ENCODE measurements at regions of chr5 and their contacts with region 1.

Region 1: GRCh38 chr5:42423285-42424165 is at the start of gene GHR:
- DNase-seq: peak; percentile 81 to 91
- ATAC-seq: peak; percentile 89 to 92 (median 90)
- H3K4me3 ChIP-seq: peak within 1 kb of the TSS; percentile 86
- H3K27ac ChIP-seq: peak within 1 kb of the TSS; percentile 89
- H3K4me1 ChIP-seq: peaks cover 41% of the 10 kb centered on the region
- H3K27me3 ChIP-seq: no peaks in the 10 kb centered on the region
- CTCF ChIP-seq: peak; percentile 88
- total RNA-seq, gene GHR: 31.4 to 60.3 (median 34.3) TPM

Region 2: DNA sequence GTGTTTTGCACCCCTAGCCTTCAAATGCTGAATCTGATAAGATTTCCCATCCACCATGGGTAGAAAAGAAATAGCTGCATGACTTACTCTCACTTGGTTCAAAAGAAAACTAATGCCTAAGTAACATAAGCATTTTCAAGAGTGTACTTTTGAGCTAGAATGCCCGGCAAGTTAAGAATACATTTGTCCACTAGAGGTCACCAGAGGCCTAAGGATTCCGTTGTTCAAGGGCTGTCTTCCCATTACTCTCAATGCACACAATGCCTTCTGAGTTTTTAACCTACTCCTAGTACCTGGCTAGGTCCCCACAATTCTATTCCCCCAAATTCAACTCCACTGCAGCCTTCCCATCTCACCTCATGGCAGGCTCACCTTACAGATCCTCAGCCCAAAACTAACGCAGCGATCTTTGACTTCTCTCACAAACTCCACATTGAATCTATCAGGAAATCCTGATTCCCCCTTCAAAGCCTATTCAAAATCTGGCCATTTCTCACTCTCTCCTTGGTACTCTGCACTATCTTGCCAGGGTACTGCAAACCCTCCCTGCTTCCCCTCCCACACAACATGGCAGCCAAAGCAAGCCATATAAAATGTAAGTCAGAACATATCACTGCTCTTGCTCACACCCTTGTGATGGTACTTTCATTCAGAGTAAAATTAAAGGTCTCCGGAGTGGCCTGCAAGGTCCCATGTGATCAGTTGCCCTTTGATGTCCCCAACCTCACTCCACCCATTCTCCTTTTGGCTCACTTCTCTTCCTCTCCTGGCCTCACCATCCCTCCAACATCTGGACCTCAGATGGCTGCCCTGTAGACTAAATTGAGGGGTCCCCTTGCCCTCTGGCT is 566.7 kb before region 1 on chr5:
- intact Hi-C with region 1: loop called in 1 of 2 experiments (anchors 10 kb)
- DNase-seq: no peak
- ATAC-seq: peak; percentile 75 to 94 (median 82)
- H3K4me3 ChIP-seq: no peak overlapping the region
- H3K27ac ChIP-seq: no peak overlapping the region
- H3K4me1 ChIP-seq: no peaks in the 10 kb centered on the region
- H3K27me3 ChIP-seq: no peaks in the 10 kb centered on the region
- CTCF ChIP-seq: peak; percentile 85

Region 3: DNA sequence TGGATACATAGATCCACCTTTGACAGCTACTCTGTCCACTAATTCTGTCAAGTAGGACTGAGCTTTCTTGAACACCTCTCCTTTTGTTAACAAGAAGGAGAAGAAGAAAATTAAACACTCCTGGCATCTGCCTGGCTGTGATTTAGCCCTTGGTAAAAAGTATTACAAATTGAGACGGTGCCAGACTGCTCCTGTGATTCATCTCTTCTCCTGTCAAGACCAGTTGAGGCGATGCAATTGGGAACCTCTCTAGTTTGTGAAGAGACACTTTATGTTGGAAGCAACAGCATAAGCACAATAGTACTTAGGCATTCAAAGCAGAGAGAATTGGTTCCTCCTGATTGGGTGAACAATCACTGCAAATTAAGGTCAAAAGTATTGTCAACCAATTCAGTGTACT is 72.4 kb after region 1 on chr5:
- intact Hi-C with region 1: loop called in 1 of 2 experiments (anchors 5 kb)
- DNase-seq: no peak
- ATAC-seq: peak; percentile 60 to 88 (median 73)
- H3K4me3 ChIP-seq: no peak overlapping the region
- H3K27ac ChIP-seq: peak overlapping the region; percentile 72
- H3K4me1 ChIP-seq: peaks cover 91% of the 10 kb centered on the region
- H3K27me3 ChIP-seq: no peaks in the 10 kb centered on the region
- CTCF ChIP-seq: no peak

Region 4: GRCh38 chr5:42555797-42556196 is 132.3 kb after region 1 on chr5:
- intact Hi-C with region 1: no loop called
- DNase-seq: no peak
- ATAC-seq: peak; percentile 79 to 89 (median 84)
- H3K4me3 ChIP-seq: peak overlapping the region; percentile 2
- H3K27ac ChIP-seq: peak overlapping the region; percentile 84
- H3K4me1 ChIP-seq: peaks cover 32% of the 10 kb centered on the region
- H3K27me3 ChIP-seq: no peaks in the 10 kb centered on the region
- CTCF ChIP-seq: no peak

Region 5: GRCh38 chr5:42583322-42583721 is 159.8 kb after region 1 on chr5:
- intact Hi-C with region 1: loop called (anchors 1 to 5 kb)
- DNase-seq: no peak
- ATAC-seq: peak; percentile 53 to 61 (median 54)
- H3K4me3 ChIP-seq: no peak overlapping the region
- H3K27ac ChIP-seq: peak overlapping the region; percentile 74
- H3K4me1 ChIP-seq: peaks cover 65% of the 10 kb centered on the region
- H3K27me3 ChIP-seq: no peaks in the 10 kb centered on the region
- CTCF ChIP-seq: peak; percentile 78

Region 6: GRCh38 chr5:42767491-42768105 is 344.1 kb after region 1 on chr5:
- intact Hi-C with region 1: loop called in 1 of 2 experiments (anchors 10 kb)
- DNase-seq: no peak
- ATAC-seq: peak in 1 of 4 donors; percentile 74
- H3K4me3 ChIP-seq: no peak overlapping the region
- H3K27ac ChIP-seq: no peak overlapping the region
- H3K4me1 ChIP-seq: no peaks in the 10 kb centered on the region
- H3K27me3 ChIP-seq: no peaks in the 10 kb centered on the region
- CTCF ChIP-seq: peak; percentile 67